Vagina (tissue), 2 donors: ENCODE measurements at regions of chr16 and their contacts with region 1.

Region 1: GRCh38 chr16:14042706-14043105 is 28.4 kb upstream of the MRTFB start:
- DNase-seq: no peak
- H3K4me3 ChIP-seq: no peak overlapping the region
- H3K27ac ChIP-seq: no peak overlapping the region
- H3K4me1 ChIP-seq: no peaks in the 10 kb centered on the region
- H3K27me3 ChIP-seq: no peaks in the 10 kb centered on the region
- CTCF ChIP-seq: no peak
- POLR2A ChIP-seq: no peak

Region 2: DNA sequence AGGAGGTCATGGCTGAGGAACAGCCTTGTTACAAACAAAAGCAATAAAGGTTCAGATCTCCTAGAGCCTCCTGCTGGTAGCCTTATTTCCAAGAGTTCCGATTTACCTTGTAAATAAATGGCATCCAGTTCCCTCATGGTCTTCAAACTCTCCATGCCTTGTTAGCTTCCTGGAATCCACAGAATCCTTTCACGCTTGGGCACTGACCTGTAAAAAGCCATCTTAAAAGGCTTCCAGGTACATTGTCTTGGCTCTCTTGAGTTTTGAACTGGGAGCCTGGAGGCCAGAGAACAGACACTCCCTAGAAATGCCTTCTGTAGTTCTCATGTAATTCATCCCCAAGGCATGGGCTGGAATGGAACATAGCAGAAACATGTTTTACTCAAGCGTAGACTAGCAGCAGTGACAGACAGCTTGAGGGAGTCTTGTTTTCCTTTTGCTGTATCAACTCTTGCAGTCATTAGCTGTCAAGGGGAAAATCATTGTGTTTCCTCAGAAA is 1858.2 kb before region 1 on chr16:
- intact Hi-C with region 1: loop called (anchors 5 kb)
- DNase-seq: no peak
- H3K4me3 ChIP-seq: no peak overlapping the region
- H3K27ac ChIP-seq: no peak overlapping the region
- H3K4me1 ChIP-seq: peaks cover 34% of the 10 kb centered on the region
- H3K27me3 ChIP-seq: no peaks in the 10 kb centered on the region
- CTCF ChIP-seq: no peak
- POLR2A ChIP-seq: no peak

Region 3: DNA sequence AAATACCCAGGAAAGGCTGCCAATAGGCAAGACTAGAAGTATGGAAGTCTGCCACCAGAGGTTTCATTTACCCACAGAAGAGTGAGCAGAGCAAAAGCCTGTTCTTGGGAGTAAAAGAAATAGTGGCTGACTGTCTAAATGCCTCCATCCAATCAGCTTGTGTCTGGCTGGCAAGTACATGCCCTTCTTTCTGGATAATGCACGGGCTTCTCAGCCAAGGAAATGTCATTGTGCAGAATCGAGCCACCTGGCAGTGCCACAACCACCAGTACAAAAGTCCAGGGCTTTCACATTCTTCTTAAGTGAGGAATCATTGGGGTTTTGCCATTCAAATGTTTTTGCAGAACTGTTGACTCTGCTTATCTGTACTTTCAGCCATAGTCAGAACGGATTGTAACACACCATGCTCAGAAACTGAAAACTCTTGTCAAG is 132.8 kb before region 1 on chr16:
- intact Hi-C with region 1: no loop called
- DNase-seq: no peak
- H3K4me3 ChIP-seq: no peak overlapping the region
- H3K27ac ChIP-seq: no peak overlapping the region
- H3K4me1 ChIP-seq: peaks cover 5% of the 10 kb centered on the region
- H3K27me3 ChIP-seq: no peaks in the 10 kb centered on the region
- CTCF ChIP-seq: no peak
- POLR2A ChIP-seq: no peak

Region 4: DNA sequence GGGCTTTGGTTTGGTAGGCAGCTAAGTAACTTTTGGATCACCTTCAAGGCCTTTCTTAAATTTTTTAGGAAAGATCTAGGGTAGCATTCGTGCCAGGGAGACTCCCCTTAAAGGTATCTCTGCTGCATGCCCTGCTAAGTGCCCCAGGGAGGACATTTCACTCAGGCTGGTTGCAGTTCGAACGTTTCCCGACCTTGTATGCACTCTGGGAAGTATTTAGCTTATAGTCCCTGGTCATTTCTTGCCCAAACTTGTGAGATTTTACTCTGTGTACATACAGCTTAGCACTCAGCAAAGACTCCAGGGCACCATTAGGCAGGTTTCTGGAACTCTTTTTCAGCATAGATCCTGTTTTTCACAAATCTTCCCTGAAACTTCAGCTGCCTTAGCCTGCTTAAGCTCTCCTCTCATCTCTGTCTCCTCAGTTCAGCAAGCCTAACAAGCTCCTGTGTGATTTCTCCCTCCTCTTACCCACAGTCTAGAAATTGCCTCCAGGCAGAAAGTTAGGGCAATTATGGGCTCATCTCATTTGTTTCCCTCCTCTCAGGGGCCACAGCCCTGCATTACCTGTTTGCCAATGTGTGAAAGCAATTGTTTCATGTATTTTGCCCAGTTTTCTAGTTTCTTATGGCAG is 113.0 kb after region 1 on chr16:
- intact Hi-C with region 1: no loop called
- DNase-seq: no peak
- H3K4me3 ChIP-seq: no peak overlapping the region
- H3K27ac ChIP-seq: peak overlapping the region; percentile 35
- H3K4me1 ChIP-seq: peaks cover 36% of the 10 kb centered on the region
- H3K27me3 ChIP-seq: no peaks in the 10 kb centered on the region
- CTCF ChIP-seq: no peak
- POLR2A ChIP-seq: no peak